Activated CD4-positive, alpha-beta T cell treated with anti-CD3 and anti-CD28 coated beads, Interleukin-2, amount 10 ng/mL, durations not matched to agents 24 days and 14 days (primary cell): ENCODE measurements at regions of chr9 and their contacts with region 1.

Region 1: DNA sequence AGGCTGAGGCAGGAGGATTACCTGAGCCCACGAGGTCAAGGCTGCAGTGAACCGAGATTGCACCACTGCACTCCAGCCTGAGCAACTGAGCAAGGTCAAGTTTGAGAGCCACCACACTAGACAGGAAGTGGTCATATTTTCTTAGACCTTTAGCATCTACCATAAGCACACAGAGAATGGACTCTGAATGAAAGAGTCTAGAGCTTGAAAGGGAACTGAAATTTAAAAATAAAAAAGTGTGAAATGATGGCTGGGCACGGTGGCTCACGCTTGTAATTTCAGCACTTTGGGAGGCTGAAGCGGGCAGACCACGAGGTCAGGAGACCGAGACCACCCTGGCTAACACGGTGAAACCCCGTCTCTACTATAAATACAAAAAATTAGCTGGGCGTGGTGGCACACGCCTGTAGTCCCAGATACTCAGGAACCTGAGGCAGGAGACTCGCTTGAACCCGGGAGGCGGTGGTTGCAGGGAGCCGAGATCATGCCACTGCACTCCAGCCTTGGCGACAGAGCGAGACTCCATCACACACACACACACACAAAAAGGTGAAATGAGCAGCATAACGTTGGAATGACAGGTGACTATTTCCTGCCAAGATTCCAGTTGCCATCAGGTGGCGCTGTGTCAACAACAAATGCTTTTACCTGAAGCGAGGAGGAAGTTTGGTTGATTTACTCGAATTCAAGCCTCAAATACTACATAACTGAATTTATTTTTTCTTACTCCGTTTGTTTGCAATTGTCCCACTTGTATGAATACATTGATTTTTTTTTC is 21.3 kb upstream of the AK3 start:
- DNase-seq: peak; percentile 94
- H3K4me3 Mint-ChIP-seq: peak overlapping the region; percentile 63
- H3K27ac Mint-ChIP-seq: peak overlapping the region; percentile 22
- H3K4me1 Mint-ChIP-seq: peaks cover 16% of the 10 kb centered on the region
- H3K27me3 Mint-ChIP-seq: peaks cover 6% of the 10 kb centered on the region

Region 2: DNA sequence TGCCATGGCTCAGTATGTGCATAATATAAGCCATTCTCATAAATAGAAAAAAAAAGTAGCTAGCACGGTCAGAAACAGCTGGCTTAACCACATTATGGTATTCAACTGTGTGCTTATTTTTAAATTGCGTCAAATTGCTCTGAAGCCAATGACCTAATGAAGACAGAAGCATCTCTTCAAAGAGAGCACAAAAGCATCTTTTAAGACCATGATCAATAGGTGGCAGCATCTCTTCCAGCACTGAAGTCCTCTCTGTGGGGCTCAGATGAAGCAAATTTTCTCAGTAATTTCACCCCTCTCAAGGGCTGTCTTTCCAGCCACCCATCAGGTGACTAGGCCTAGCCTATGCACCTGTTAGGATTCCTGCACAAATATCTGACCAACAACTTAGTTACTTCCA is 713.9 kb before region 1 on chr9:
- intact Hi-C with region 1: no loop called
- DNase-seq: no peak
- H3K4me3 Mint-ChIP-seq: no peak overlapping the region
- H3K27ac Mint-ChIP-seq: no peak overlapping the region
- H3K4me1 Mint-ChIP-seq: no peaks in the 10 kb centered on the region
- H3K27me3 Mint-ChIP-seq: no peaks in the 10 kb centered on the region

Region 3: GRCh38 chr9:4604678-4605095 is 157.6 kb before region 1 on chr9:
- intact Hi-C with region 1: no loop called
- DNase-seq: peak; percentile 91
- H3K4me3 Mint-ChIP-seq: no peak overlapping the region
- H3K27ac Mint-ChIP-seq: no peak overlapping the region
- H3K4me1 Mint-ChIP-seq: peaks cover 14% of the 10 kb centered on the region
- H3K27me3 Mint-ChIP-seq: peaks cover 1% of the 10 kb centered on the region

Region 4: GRCh38 chr9:4923580-4924544 is 161.6 kb after region 1 on chr9:
- intact Hi-C with region 1: loop called (anchors 1 kb)
- DNase-seq: peak; percentile 79
- H3K4me3 Mint-ChIP-seq: no peak overlapping the region
- H3K27ac Mint-ChIP-seq: peak overlapping the region; percentile 59
- H3K4me1 Mint-ChIP-seq: peaks cover 27% of the 10 kb centered on the region
- H3K27me3 Mint-ChIP-seq: no peaks in the 10 kb centered on the region

Region 5: GRCh38 chr9:5073701-5074100 is 311.4 kb after region 1 on chr9:
- intact Hi-C with region 1: loop called (anchors 10 kb)
- DNase-seq: no peak
- H3K4me3 Mint-ChIP-seq: no peak overlapping the region
- H3K27ac Mint-ChIP-seq: peak overlapping the region; percentile 11
- H3K4me1 Mint-ChIP-seq: peaks cover 17% of the 10 kb centered on the region
- H3K27me3 Mint-ChIP-seq: no peaks in the 10 kb centered on the region

Region 6: GRCh38 chr9:5186416-5187169 is 424.3 kb after region 1 on chr9:
- intact Hi-C with region 1: loop called (anchors 5 kb)
- DNase-seq: peak; percentile 87
- H3K4me3 Mint-ChIP-seq: no peak overlapping the region
- H3K27ac Mint-ChIP-seq: no peak overlapping the region
- H3K4me1 Mint-ChIP-seq: peaks cover 17% of the 10 kb centered on the region
- H3K27me3 Mint-ChIP-seq: peaks cover 1% of the 10 kb centered on the region

Region 7: DNA sequence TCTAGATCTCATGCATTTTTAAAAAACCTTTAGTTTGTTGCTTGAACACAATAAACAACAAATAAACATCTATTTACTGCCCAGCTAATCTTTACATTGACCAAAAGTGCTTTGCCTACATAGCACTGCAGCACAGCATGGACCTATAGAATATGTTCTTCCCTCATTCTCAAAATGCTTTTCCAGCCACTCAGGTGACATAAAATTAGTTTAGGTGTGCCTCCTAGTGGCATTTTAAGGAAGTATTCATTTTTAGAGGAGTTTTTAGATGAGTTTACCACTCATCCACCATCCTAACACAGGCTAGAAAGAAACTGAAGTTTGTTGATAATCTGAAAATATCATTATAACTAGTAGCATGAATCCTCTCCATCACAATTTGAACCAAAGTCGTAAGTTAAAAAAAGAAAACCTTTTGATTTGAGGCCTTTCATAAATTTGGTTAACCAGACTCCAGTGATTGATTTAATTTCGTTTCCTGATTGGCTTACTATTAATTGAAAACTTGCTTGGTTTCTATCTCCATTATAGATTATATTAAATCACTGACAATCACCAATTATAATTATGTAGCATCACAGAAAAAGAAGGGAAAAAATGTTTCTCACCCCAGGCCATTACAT is 662.8 kb after region 1 on chr9:
- intact Hi-C with region 1: loop called (anchors 2 kb)
- DNase-seq: no peak
- H3K4me3 Mint-ChIP-seq: no peak overlapping the region
- H3K27ac Mint-ChIP-seq: no peak overlapping the region
- H3K4me1 Mint-ChIP-seq: peaks cover 11% of the 10 kb centered on the region
- H3K27me3 Mint-ChIP-seq: no peaks in the 10 kb centered on the region